Activated CD8-positive, alpha-beta T cell treated with anti-CD3 and anti-CD28 coated beads, Interleukin-2, amount 10 ng/mL, durations not matched to agents 7 days and 5 days (primary cell): ENCODE measurements at regions of chr5 and their contacts with region 1.

Region 1: DNA sequence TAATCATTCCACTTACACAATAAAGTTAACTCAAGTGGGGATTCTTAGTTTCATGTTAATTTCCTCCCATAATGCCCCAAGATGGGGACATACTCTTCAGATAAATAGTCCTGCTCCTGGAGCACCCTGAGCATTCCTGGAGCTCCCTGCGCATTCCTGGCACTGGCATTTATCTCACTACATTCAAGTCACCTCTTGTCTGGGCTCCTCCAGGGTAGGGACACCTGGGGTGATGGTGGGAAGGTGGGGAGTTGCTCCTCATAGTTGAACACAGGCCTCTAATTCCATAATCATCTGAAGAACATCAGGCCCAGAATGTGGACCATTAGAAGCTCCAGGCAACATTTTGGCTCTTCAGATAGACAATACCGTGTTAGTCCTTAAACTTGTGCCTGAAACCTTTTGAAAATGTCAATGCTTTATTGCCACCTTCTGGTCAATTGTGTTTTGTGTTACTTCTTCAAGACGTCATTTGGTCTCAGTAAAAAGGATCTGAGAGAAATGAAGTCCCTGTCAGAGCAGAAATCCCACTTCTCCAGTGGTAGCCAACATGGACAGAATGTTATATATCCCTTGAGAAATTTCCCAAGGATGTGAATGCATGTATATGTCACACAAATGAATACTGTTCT is 14.2 kb upstream of the AGGF1 start:
- DNase-seq: no peak
- ATAC-seq: peak; percentile 42
- H3K4me3 Mint-ChIP-seq: no peak overlapping the region
- H3K27ac Mint-ChIP-seq: no peak overlapping the region
- H3K4me1 Mint-ChIP-seq: peaks cover 15% of the 10 kb centered on the region
- H3K27me3 Mint-ChIP-seq: peaks cover 16% of the 10 kb centered on the region

Region 2: DNA sequence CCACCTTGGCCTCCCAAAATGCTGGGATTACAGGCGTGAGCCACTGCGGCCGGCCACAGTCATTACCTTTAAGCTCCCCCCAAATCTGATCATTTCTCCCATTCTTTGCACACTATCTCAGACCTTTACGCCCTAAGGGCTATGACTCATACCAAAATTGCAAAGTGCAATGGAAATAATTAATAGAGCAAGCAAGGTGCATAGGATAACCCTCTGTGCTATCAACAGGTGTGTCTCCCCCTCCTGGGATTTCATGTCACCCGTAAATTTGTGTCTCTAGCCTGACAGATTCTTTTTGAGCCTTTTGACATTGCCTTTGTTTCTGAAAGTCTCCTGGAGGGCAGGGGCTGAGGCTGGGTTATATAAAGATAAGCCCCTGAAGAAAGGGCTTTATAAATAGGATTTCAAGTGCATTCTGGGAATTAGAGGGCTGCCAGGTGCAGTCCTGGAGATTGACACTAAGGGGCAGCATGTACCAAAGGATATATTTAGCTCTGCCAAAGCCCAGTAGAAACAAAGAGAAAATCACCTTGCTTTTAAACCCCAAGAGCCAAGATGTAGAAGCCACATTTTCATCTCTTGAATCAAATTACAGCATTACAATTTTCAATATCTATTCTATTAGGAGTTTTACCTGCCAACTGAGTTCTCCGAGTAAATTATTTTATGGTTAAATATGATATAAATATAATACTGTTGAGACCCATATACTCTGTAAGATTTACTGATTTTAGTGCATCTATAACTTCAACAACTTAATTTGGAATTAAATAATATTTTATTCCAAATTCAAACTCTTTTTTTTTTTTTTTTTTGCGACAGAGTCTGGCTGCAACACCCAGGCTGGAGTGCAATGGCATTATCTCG is 148.0 kb before region 1 on chr5:
- CTCF ChIA-PET with region 1: interaction called, 12 read pairs
- POLR2A ChIA-PET with region 1: no interaction called
- DNase-seq: peak; percentile 80
- ATAC-seq: peak; percentile 76
- H3K4me3 Mint-ChIP-seq: no peak overlapping the region
- H3K27ac Mint-ChIP-seq: no peak overlapping the region
- H3K4me1 Mint-ChIP-seq: peaks cover 4% of the 10 kb centered on the region
- H3K27me3 Mint-ChIP-seq: no peaks in the 10 kb centered on the region

Region 3: DNA sequence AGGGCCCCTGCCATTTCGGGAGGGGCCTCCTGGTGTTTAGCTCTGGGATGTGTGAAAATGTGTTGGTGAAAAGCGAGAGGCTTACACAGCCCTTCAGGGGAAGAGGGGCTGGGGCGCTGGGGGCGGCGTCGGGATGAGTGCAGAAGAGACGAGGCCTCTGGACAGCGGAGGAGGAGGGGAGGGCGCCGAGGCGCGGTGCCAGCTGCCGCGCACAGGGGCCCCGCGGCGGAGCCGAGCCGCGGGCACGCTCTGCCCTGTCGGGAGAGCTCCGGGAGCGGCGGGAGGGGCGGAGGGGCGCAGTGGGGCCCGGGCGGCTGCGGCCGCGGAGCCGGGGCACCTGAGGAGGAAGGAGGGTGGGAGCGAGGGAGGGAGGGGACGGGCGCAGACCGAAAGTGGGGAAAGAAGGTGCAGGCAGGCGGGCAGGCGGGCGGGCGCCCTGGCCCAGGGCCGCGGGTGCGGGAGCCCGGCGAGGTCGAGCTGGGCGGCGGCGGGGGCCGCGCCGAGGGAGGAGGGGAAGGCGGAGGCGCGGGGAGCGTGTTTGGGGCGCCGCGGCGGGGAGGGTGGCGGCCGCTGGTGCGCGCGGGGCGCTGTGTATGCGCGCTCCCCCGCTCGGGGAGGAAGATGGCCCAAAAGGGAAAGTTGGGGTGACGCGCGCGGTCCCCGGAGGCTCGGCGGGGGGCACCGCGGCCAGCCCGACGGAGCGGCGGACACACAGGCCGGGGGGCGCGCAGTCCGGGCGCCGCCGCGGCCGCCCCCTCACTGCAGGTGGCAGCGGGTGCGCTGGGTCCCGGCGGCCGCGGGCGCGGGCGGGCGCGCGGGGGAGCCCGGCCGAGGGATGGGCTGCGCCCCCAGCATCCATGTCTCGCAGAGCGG is 194.3 kb after region 1 on chr5 and contains the start of gene PDE8B:
- CTCF ChIA-PET with region 1: no interaction called
- POLR2A ChIA-PET with region 1: no interaction called
- DNase-seq: no peak
- ATAC-seq: peak; percentile 74
- H3K4me3 Mint-ChIP-seq: peak within 1 kb of the TSS; percentile 73
- H3K27ac Mint-ChIP-seq: no peak within 1 kb of the TSS
- H3K4me1 Mint-ChIP-seq: peaks cover 12% of the 10 kb centered on the region
- H3K27me3 Mint-ChIP-seq: peaks cover 63% of the 10 kb centered on the region
- total RNA-seq, gene PDE8B: not detected